Heart left ventricle (tissue), 16 donors: ENCODE measurements at regions of chr21 and their contacts with region 1.

Region 1: DNA sequence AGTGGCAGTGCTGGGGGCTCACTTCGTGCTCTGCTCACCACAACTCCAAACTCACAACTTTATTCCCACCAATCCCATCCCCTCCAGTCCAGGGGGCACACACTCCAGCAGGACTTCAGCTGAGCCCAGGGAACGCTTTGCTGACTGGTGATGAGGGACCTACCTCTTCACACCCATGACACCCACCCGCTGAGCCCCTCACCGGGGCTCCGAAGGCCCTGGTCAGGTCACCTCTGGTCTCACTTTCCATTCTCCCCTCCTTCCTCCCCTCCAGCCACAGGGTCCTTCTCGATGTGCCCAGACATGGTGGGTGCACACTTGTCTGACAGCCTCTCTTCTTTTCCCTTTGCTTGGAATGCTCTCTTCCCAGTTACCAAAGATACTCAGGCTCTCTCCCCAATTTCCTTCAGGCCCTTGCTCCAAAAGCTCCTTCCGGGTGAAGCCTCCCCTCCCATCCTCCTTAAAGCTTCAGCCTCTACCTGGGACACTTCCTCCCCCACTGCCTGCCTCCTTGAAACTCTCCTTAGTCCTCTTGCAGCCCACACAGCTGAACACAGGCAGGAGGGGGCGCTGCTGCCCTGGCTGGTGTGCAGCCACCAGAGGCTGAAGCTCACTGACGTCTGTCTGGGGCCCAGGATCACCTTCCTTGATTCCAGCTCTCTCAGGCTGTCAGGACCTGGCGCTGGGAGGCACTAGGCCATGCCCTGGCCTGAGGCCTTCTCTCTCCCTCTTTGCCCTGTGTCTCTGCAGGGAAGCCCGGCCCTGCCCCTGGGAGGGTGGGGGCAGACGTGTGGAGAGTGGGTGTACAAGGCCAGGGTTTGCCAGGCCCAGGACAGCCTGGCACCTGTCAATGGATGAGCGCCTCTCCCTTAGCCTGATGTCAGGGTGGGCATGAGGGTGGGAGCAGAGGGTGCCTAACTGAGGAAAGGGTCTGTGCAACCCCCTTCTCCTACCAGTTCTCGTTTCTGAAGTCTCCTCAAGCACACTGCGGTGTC is 1.6 kb downstream of the KCNE1 start:
- DNase-seq: peak; percentile 82 to 92 (median 87)
- ATAC-seq: peak; percentile 80 to 92 (median 88)
- H3K4me3 ChIP-seq: peak overlapping the region in 3 of 12 donors; percentile 6 to 49 (median 10)
- H3K27ac ChIP-seq: peak overlapping the region in 8 of 12 donors; percentile 13 to 94 (median 46)
- H3K4me1 ChIP-seq: peaks cover 0 to 35% (median 9%) of the 10 kb centered on the region in 12 donors
- H3K27me3 ChIP-seq: no peaks in the 10 kb centered on the region
- CTCF ChIP-seq: peak; percentile 74 to 86 (median 80)
- POLR2A ChIP-seq: no peak

Region 2: DNA sequence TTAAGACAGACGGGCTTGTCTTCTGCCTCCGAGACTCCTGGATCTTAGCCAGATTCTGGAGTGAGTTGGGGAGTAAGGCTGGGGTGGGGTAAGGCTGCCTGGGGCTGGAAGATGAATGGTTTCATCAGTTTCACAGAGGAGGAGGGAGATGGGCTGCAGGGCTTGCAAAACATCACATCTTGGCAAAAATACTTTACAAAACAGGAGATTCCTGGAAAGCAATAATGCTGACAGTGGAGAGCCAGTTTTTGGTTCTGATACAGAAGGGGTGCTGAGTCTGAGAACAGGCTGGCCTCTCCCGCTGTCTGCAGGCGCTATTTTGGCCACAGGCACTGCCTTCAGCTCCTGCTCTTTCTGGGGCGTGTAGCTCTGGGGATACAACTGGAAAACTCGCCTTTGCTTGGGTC is 230.1 kb before region 1 on chr21:
- intact Hi-C with region 1: no loop called
- DNase-seq: peak in 2 of 5 donors; percentile 32 to 50
- ATAC-seq: peak; percentile 64 to 73 (median 71)
- H3K4me3 ChIP-seq: no peak overlapping the region
- H3K27ac ChIP-seq: no peak overlapping the region
- H3K4me1 ChIP-seq: peaks cover 0 to 8% (median 0%) of the 10 kb centered on the region in 12 donors
- H3K27me3 ChIP-seq: no peaks in the 10 kb centered on the region
- CTCF ChIP-seq: no peak
- POLR2A ChIP-seq: no peak

Region 3: GRCh38 chr21:34567604-34568385 is 57.4 kb after region 1 on chr21:
- intact Hi-C with region 1: no loop called
- DNase-seq: no peak
- ATAC-seq: peak in 1 of 4 donors; percentile 27
- H3K4me3 ChIP-seq: no peak overlapping the region
- H3K27ac ChIP-seq: peak overlapping the region in 8 of 12 donors; percentile 23 to 56 (median 32)
- H3K4me1 ChIP-seq: peaks cover 0 to 51% (median 12%) of the 10 kb centered on the region in 12 donors
- H3K27me3 ChIP-seq: no peaks in the 10 kb centered on the region
- CTCF ChIP-seq: no peak
- POLR2A ChIP-seq: no peak

Region 4: DNA sequence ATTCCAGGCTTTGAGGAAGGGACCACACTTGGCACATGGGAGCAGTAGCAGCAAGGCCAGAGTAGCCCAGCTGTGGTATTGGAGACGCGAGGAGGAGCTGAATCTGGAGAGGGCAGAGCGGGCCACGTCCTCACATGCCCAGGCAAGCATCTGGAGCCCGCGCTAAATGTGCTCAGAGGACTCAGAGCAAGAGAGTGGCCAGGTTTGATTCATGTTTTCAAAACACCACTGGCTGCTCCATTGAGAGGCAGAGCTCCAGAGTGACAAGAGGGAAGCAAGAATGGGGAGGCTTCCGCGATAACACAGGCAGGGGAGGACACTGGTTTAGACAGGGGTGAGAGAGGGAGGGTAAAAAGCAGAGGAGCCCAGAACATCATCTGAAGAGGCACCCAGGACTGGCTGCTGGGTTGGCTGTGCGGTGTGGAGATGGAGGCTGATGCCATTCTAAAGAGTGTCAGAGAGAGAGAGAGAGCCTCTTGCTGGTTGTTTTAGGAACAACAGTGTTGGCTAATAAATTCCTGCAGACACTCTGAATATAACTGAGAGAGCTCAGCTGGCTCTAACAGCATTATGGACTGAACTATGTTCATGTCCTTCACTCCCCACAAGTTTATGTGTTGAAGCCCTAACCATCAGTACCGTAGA is 72.2 kb after region 1 on chr21:
- intact Hi-C with region 1: loop called in 1 of 10 experiments (anchors 1 kb)
- DNase-seq: peak in 3 of 5 donors; percentile 40 to 59 (median 52)
- ATAC-seq: peak; percentile 70 to 80 (median 76)
- H3K4me3 ChIP-seq: no peak overlapping the region
- H3K27ac ChIP-seq: peak overlapping the region in 11 of 12 donors; percentile 56 to 95 (median 80)
- H3K4me1 ChIP-seq: peaks cover 0 to 72% (median 37%) of the 10 kb centered on the region in 12 donors
- H3K27me3 ChIP-seq: no peaks in the 10 kb centered on the region
- CTCF ChIP-seq: peak; percentile 14 to 51 (median 42)
- POLR2A ChIP-seq: no peak

Region 5: GRCh38 chr21:34603002-34603709 is 92.7 kb after region 1 on chr21:
- intact Hi-C with region 1: loop called in 4 of 10 experiments (anchors 1 to 2 kb)
- DNase-seq: peak; percentile 80 to 90 (median 83)
- ATAC-seq: peak; percentile 94 to 97 (median 96)
- H3K4me3 ChIP-seq: no peak overlapping the region
- H3K27ac ChIP-seq: peak overlapping the region in 2 of 12 donors; percentile 22 to 63
- H3K4me1 ChIP-seq: peaks cover 0 to 25% (median 6%) of the 10 kb centered on the region in 12 donors
- H3K27me3 ChIP-seq: no peaks in the 10 kb centered on the region
- CTCF ChIP-seq: peak; percentile 60 to 85 (median 81)
- POLR2A ChIP-seq: no peak

Region 6: GRCh38 chr21:34630536-34631143 is 120.2 kb after region 1 on chr21:
- intact Hi-C with region 1: loop called in 2 of 10 experiments (anchors 1 kb)
- DNase-seq: peak in 1 of 5 donors; percentile 28
- ATAC-seq: peak; percentile 29 to 74 (median 68)
- H3K4me3 ChIP-seq: no peak overlapping the region
- H3K27ac ChIP-seq: no peak overlapping the region
- H3K4me1 ChIP-seq: peaks cover 0 to under 1% (median 0%) of the 10 kb centered on the region in 12 donors
- H3K27me3 ChIP-seq: peaks cover 0 to 10% (median 0%) of the 10 kb centered on the region in 9 donors
- CTCF ChIP-seq: peak; percentile 67 to 89 (median 77)
- POLR2A ChIP-seq: no peak